ENCODE measurements at regions of chr22 and their contacts with region 1.

Region 1: DNA sequence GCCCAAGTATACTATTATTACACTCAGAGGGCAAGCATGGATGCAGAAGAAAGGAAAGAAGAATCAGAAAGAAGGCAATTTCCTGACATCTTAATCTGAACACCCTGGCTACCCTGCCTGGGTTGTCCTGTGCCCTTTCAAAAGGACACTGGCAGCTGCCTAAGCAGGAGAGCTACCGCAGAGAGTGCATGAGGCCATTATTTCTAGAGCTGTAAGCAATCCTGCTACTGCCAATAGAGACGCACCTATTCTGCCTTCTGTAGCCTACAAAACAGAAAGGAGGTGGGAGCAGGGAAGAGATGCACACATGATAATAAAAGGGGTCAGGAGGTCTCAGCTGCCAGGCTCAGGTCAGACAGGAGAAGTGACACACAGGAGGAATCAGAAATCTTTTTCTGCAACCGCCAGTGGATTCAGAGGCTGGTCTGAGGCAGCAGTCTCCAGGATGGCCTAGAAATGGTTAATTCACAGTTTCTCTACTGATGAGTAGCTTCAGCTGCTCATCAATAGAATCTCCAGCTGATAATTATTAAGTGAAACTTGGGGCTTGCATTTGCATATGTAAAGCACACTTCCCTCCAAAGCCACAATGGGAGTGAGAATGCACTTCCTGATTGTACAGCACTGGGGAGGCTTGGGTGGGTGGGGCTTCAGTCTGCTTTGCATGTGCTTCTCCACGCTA is 253.9 kb downstream of the LARGE1 start:
- DNase-seq: no peak
- H3K4me3 ChIP-seq: no peak overlapping the region
- H3K27ac ChIP-seq: peak overlapping the region in 2 of 4 donors; percentile 41 to 49
- H3K4me1 ChIP-seq: peaks cover 0 to 44% (median 28%) of the 10 kb centered on the region in 4 donors
- H3K27me3 ChIP-seq: no peaks in the 10 kb centered on the region
- CTCF ChIP-seq: no peak
- EP300 ChIP-seq: no peak
- POLR2A ChIP-seq: no peak

Region 2: DNA sequence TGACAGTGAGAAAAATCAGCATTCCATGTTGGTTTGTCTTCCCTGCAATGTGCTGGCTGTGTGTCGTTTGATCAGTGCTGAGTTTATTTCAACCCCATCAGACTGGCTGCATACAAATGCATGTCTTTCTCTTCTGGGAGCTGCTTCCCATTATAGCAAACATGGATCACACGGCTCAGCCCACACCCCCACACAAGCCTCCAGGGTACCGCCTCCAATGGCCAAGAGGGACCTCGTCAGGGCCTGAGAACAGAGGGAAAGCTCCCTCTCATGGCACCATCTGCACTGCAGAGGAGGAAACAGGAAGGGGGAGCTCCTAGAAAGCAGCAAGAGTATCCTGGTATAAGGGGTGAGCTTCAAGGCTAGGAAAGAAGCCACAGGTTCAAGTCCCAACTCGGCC is 39.7 kb after region 1 on chr22:
- intact Hi-C with region 1: no loop called
- DNase-seq: no peak
- H3K4me3 ChIP-seq: no peak overlapping the region
- H3K27ac ChIP-seq: no peak overlapping the region
- H3K4me1 ChIP-seq: peaks cover 0 to 6% (median 0%) of the 10 kb centered on the region in 4 donors
- H3K27me3 ChIP-seq: no peaks in the 10 kb centered on the region
- CTCF ChIP-seq: no peak
- EP300 ChIP-seq: no peak
- POLR2A ChIP-seq: no peak

Region 3: GRCh38 chr22:33726294-33726734 is 59.9 kb after region 1 on chr22:
- intact Hi-C with region 1: loop called (anchors 10 kb)
- DNase-seq: peak; percentile 70
- H3K4me3 ChIP-seq: no peak overlapping the region
- H3K27ac ChIP-seq: peak overlapping the region; percentile 56 to 80 (median 64)
- H3K4me1 ChIP-seq: peaks cover 0 to 44% (median 33%) of the 10 kb centered on the region in 4 donors
- H3K27me3 ChIP-seq: no peaks in the 10 kb centered on the region
- CTCF ChIP-seq: no peak
- EP300 ChIP-seq: peak; percentile 34 to 85 (median 75)
- POLR2A ChIP-seq: no peak

Region 4: GRCh38 chr22:33896575-33897447 is 230.4 kb after region 1 on chr22:
- intact Hi-C with region 1: no loop called
- DNase-seq: no peak
- H3K4me3 ChIP-seq: no peak overlapping the region
- H3K27ac ChIP-seq: peak overlapping the region in 1 of 4 donors; percentile 14
- H3K4me1 ChIP-seq: peaks cover 0 to 68% (median 57%) of the 10 kb centered on the region in 4 donors
- H3K27me3 ChIP-seq: no peaks in the 10 kb centered on the region
- CTCF ChIP-seq: no peak
- EP300 ChIP-seq: no peak
- POLR2A ChIP-seq: no peak

Measured in sigmoid colon (tissue), 7 donors.